ENCODE measurements at regions of chr3 and their contacts with region 1.

Region 1: DNA sequence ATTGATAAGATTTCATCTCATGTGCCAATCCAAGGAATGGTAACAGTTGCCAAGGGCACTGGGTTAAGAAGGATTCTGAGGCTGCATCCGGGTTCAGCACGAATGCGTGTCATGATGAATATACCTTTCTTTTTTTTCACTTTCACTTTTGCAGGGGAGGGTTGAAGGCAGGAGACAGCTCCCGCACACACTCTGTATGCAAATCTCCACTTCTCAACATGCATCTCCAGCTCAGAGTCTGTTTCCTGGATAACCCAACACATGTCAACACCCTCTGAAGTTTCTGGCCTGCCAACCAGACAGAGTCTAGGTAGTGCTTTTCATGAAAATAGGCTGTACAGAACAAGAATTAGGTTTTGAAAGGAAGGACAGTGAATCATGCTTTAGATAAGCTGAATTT is 21.6 kb downstream of the B4GALT4 start:
- DNase-seq: no peak
- H3K4me3 ChIP-seq: no peak overlapping the region
- H3K27ac ChIP-seq: no peak overlapping the region
- H3K4me1 ChIP-seq: no peaks in the 10 kb centered on the region
- H3K27me3 ChIP-seq: no peaks in the 10 kb centered on the region
- CTCF ChIP-seq: no peak

Region 2: DNA sequence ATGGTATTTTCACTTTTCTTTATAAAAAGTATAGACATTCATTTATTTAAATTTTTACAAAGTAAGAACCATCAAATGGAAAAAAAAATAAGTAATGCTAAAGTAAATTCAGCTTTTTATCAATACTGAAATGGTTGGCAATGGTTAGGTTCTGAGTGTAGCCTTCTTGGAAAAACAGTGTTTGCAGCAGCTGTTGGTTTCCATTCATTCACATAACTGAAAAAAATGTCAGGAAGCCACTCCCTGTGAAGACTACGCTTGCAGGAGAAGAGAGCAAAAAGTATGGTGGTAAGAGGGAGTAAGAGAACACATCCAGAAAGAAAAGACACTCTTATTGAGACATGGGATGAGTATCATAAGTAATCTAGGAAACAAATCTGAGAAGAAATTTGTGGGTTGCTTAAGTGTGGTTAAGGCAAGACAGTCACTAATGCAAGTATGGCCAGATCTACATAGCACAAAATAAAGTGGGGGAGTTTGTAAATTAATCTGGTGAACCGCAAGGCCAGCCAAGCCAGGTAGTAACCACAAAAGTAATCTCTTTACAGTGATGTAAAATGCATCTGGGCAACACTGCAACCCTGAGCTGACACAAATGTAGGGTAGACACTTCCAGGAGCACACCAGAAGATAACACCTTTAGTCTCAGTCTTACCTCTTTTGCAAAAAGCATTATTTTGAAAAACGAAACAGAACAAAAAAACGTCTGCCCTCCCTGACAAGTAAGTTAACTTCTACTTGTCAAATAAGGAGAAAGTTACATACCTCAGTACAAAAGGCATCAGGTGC is 318.1 kb before region 1 on chr3:
- intact Hi-C with region 1: loop called (anchors 10 kb)
- DNase-seq: no peak
- H3K4me3 ChIP-seq: no peak overlapping the region
- H3K27ac ChIP-seq: no peak overlapping the region
- H3K4me1 ChIP-seq: no peaks in the 10 kb centered on the region
- H3K27me3 ChIP-seq: no peaks in the 10 kb centered on the region
- CTCF ChIP-seq: no peak

Region 3: DNA sequence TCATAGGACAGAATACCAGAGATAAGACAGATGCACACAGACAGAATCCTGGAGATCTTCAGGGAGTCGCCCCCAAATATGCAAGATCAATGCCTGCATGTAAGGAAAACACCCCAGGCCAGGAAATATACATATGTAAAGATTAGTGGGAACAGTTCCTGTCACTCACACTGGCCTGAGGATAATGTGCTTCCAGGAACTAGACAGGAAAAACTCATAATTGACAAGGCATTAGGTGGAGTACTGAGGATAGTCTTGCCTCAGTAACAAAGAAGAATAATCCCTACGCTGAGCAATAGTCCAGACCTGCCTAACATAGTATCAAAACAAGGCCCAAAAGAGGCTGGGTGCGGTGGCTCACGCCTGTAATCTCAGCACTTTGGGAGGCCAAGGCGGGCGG is 42.0 kb after region 1 on chr3:
- intact Hi-C with region 1: no loop called
- DNase-seq: no peak
- H3K4me3 ChIP-seq: no peak overlapping the region
- H3K27ac ChIP-seq: no peak overlapping the region
- H3K4me1 ChIP-seq: peaks cover 9% of the 10 kb centered on the region
- H3K27me3 ChIP-seq: no peaks in the 10 kb centered on the region
- CTCF ChIP-seq: no peak

Measured in left ventricle myocardium inferior (tissue), 1 donor.